Activated T-helper 1 cell treated with anti-CD3 and anti-CD28 coated beads, Interleukin-12 subunit alpha, Interleukin-12 subunit beta, Interleukin-2, Interleukin-4 antibody, amounts not matched to agents 30 ng/mL and 10 ng/mL and 1 ng/mL, durations not matched to agents 14 hours and 24 hours and 36 hours (primary cell): ENCODE measurements at regions of chr3 and their contacts with region 1.

Region 1: GRCh38 chr3:125141596-125142419 is 70.7 kb downstream of the SLC12A8 start:
- DNase-seq: peak; percentile 69
- H3K4me3 Mint-ChIP-seq: peak overlapping the region; percentile 76
- H3K27ac Mint-ChIP-seq: peak overlapping the region; percentile 81
- H3K4me1 Mint-ChIP-seq: peaks cover 61% of the 10 kb centered on the region
- H3K27me3 Mint-ChIP-seq: peaks cover 34% of the 10 kb centered on the region

Region 2: DNA sequence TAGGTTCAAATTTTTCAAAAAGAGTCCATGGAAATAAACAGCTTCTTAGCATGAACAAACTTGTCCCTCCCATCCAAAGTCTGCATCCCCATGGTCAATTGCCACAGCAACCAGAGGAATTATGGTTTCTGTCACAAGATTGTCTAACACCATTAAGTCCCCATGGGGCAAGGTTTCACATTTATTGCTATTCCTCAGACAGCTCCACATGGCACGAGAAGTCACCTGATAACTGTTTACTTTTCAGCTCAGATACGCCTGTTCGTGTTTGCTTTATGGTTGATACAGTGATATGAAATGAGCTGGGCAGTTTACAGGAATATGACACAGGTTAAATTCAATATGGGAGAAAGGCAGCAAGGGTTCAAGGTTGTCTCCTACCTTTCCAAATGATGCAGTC is 169.3 kb before region 1 on chr3:
- intact Hi-C with region 1: no loop called
- DNase-seq: no peak
- H3K4me3 Mint-ChIP-seq: no peak overlapping the region
- H3K27ac Mint-ChIP-seq: no peak overlapping the region
- H3K4me1 Mint-ChIP-seq: peaks cover 15% of the 10 kb centered on the region
- H3K27me3 Mint-ChIP-seq: no peaks in the 10 kb centered on the region

Region 3: GRCh38 chr3:125035217-125035616 is 106.6 kb before region 1 on chr3:
- intact Hi-C with region 1: loop called (anchors 1 kb)
- DNase-seq: no peak
- H3K4me3 Mint-ChIP-seq: peak overlapping the region; percentile 45
- H3K27ac Mint-ChIP-seq: peak overlapping the region; percentile 48
- H3K4me1 Mint-ChIP-seq: peaks cover 31% of the 10 kb centered on the region
- H3K27me3 Mint-ChIP-seq: no peaks in the 10 kb centered on the region

Region 4: GRCh38 chr3:125119752-125120378 is 21.9 kb before region 1 on chr3:
- intact Hi-C with region 1: loop called (anchors 1 kb)
- DNase-seq: no peak
- H3K4me3 Mint-ChIP-seq: no peak overlapping the region
- H3K27ac Mint-ChIP-seq: peak overlapping the region; percentile 85
- H3K4me1 Mint-ChIP-seq: peaks cover 55% of the 10 kb centered on the region
- H3K27me3 Mint-ChIP-seq: peaks cover 10% of the 10 kb centered on the region

Region 5: DNA sequence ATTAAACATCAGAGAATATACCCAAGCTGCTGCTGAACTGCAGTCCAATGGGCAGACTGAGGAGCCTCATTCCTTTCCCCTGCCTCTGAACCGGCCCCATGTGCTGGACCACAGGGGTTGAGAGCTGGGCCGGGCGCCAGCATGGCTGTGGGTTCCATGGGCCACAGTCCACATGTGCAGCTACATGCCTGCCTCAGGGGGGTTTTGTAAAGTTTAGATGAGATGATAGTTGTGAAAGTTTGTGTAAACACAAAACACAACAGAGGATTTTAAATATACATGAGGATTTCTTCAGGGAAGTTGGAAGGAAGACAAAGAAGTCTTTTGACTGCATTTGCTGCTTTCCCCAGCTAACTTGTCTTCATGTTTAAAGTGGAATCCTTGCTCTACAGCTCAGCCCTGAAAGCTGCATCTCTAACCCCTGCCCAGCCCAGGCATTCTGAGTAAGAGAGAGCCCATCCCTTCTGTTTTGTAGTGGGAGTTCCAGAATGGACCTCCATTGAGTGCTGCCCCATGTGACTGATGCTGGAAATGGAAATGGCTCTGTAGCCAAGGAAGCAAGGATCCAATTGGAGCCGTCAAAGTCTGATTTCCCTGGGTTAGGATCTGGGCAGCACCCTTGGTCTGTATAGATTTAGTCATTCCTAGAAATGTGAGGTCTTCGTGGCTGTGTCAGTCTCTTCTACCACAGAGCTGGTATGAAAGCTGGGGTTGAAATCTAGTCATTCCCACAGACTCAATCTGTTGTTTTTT is 53.2 kb after region 1 on chr3:
- intact Hi-C with region 1: loop called (anchors 1 kb)
- DNase-seq: no peak
- H3K4me3 Mint-ChIP-seq: no peak overlapping the region
- H3K27ac Mint-ChIP-seq: no peak overlapping the region
- H3K4me1 Mint-ChIP-seq: peaks cover 7% of the 10 kb centered on the region
- H3K27me3 Mint-ChIP-seq: peaks cover 46% of the 10 kb centered on the region